Activated naive CD4-positive, alpha-beta T cell treated with anti-CD3 and anti-CD28 coated beads for 36 hours (primary cell): ENCODE measurements at regions of chr3 and their contacts with region 1.

Region 1: GRCh38 chr3:102089904-102090492 is 240.7 kb downstream of the NFKBIZ start:
- DNase-seq: no peak
- H3K4me3 Mint-ChIP-seq: no peak overlapping the region
- H3K27ac Mint-ChIP-seq: no peak overlapping the region
- H3K4me1 Mint-ChIP-seq: peaks cover 44% of the 10 kb centered on the region
- H3K27me3 Mint-ChIP-seq: no peaks in the 10 kb centered on the region

Region 2: GRCh38 chr3:101724329-101725193 is 365.4 kb before region 1 on chr3 and contains the start of gene CEP97:
- CTCF ChIA-PET with region 1: no interaction called
- intact Hi-C with region 1: loop called (anchors 2 kb)
- DNase-seq: peak; percentile 94
- H3K4me3 Mint-ChIP-seq: peak within 1 kb of the TSS; percentile 97
- H3K27ac Mint-ChIP-seq: peak within 1 kb of the TSS; percentile 97
- H3K4me1 Mint-ChIP-seq: peaks cover 33% of the 10 kb centered on the region
- H3K27me3 Mint-ChIP-seq: no peaks in the 10 kb centered on the region
- total RNA-seq, gene CEP97: 17.0 to 20.3 TPM

Region 3: DNA sequence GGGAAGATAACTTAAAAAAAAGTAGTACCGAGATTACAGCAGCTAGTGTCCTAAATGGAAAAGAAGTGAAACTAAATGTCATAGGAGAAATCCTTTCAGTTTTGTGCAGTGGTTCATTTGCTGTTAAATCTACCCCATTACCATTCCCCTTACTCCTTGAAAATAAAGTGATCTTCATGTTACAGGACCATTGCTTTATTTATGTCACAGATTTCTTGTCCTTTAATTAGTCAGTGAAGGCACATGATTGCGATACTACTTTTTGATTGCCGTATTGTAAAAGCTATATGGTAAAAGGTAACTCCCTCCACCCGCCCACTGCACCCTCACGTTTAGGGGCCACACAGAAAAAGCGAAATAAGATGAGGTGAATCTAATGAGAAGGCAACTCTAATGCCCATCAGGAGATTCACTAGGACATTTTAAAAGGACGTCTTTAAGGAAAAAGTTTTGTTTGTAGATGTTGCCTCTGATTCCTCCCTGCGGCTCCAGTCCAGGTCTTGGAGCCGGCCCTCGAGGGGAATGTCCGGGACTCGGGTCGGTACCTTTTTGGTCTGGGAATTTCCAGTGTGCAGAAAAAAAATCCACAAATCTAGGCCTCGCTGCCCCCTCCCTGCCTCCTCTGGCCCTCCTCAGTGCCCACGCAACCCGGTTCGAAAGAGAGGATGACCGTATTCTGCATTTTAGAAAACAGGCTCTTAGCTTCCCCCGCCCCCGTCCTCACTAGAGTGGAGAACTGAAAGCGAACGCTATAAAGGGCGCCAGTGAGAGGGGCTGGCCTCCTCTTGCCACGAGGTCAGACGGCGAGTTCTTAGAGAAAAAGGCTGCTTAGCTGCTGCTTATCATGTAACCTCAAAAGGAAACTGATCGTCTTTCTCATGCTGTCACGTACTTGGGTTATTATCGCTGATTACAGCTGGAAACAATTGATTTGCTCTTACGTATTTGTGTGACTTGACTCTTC is 262.5 kb before region 1 on chr3:
- CTCF ChIA-PET with region 1: no interaction called
- intact Hi-C with region 1: loop called (anchors 1 kb)
- DNase-seq: peak; percentile 94
- H3K4me3 Mint-ChIP-seq: peak overlapping the region; percentile 77
- H3K27ac Mint-ChIP-seq: peak overlapping the region; percentile 94
- H3K4me1 Mint-ChIP-seq: peaks cover 60% of the 10 kb centered on the region
- H3K27me3 Mint-ChIP-seq: no peaks in the 10 kb centered on the region

Region 4: DNA sequence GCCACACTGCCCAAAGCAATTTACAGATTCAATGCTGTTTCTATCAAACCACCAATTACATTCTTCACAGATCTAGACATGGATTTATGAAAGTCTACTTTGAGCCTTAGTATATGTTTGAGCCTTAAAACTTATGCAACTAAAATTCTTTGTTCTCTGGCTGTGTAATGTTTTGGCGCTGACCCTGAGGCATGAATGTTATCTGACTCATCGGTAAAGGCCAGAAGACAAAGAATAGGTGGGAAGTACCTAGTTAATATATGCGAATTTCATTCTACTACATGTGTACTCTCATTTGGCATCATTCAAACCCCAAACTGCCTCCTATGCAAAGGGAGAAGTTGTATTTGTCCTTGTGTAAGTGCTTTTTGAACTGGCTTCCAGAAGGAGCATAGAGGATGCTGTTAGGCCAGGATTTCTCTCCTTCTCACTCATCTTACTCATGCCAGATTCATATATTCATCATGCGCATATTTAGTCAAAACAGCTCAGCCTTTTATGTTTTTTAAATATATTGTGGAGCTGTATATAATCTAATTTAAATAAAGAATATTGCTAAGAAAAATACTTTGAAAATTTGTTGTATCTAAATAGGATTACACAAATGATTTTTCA is 36.5 kb before region 1 on chr3:
- CTCF ChIA-PET with region 1: no interaction called
- intact Hi-C with region 1: loop called (anchors 1 kb)
- DNase-seq: peak; percentile 56
- H3K4me3 Mint-ChIP-seq: no peak overlapping the region
- H3K27ac Mint-ChIP-seq: no peak overlapping the region
- H3K4me1 Mint-ChIP-seq: peaks cover 33% of the 10 kb centered on the region
- H3K27me3 Mint-ChIP-seq: no peaks in the 10 kb centered on the region

Region 5: DNA sequence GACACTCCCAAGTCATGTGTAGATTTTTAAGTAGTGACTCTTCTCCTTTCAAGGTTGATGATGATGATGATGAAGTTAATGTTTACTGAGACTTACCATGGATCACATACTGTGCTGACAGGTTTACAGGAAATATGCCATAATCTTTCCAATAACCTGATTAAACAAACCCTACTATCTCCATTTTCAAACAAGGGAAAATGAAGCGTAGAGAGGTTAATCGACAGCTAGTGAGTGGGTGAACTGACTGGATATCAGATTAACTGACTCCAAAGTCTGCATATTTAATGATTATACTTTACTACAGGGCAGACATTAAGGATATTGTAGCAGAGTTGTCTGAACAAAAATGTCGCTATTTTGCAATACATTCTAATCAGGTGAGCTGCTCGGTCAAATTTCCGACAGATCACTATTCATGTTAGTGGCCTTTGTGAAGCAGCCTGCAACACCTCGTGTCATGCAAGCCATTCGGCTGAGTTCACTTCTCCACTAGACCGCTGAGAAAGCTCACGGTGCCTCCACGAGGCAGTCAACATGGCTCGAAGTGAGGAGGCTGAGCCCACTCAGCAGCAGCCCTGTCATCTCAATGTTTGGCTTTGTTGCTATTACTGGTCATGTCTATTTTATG is 23.5 kb after region 1 on chr3:
- CTCF ChIA-PET with region 1: interaction called, 4 read pairs
- intact Hi-C with region 1: loop called (anchors 1 kb)
- DNase-seq: peak; percentile 24
- H3K4me3 Mint-ChIP-seq: no peak overlapping the region
- H3K27ac Mint-ChIP-seq: peak overlapping the region; percentile 81
- H3K4me1 Mint-ChIP-seq: peaks cover 30% of the 10 kb centered on the region
- H3K27me3 Mint-ChIP-seq: no peaks in the 10 kb centered on the region

Region 6: DNA sequence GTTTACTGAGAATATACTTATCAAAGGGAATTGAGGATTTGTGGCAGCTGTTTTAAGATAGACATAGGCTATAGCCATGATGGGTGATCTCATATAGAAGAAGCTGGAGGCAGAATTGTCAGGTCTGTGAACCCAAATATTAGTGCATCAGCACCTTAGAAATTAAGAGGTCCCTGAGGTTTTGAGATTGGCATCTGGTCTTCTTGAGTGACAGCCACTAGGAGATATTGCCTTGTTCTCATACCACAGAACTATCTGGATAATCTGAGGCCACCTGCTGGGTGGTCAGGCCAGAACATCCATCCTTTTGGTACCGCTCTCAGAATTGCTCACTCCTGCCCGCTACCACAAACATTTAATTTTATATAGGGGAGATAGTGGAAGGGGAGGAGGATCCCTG is 134.1 kb after region 1 on chr3:
- CTCF ChIA-PET with region 1: interaction called, 7 read pairs
- intact Hi-C with region 1: loop called (anchors 1 kb)
- DNase-seq: peak; percentile 50
- H3K4me3 Mint-ChIP-seq: no peak overlapping the region
- H3K27ac Mint-ChIP-seq: no peak overlapping the region
- H3K4me1 Mint-ChIP-seq: peaks cover 35% of the 10 kb centered on the region
- H3K27me3 Mint-ChIP-seq: no peaks in the 10 kb centered on the region